AG04450 (cell line): ENCODE measurements at regions of chr20 and their contacts with region 1.

Region 1: GRCh38 chr20:35561268-35561667 is 19.4 kb downstream of the ERGIC3 start:
- DNase-seq: peak; percentile 4
- H3K4me3 ChIP-seq: no peak overlapping the region
- H3K27ac ChIP-seq: no peak overlapping the region
- H3K27me3 ChIP-seq: peaks cover under 1% of the 10 kb centered on the region
- CTCF ChIP-seq: peak; percentile 32; the same call in 1 of the 2 replicates

Region 2: DNA sequence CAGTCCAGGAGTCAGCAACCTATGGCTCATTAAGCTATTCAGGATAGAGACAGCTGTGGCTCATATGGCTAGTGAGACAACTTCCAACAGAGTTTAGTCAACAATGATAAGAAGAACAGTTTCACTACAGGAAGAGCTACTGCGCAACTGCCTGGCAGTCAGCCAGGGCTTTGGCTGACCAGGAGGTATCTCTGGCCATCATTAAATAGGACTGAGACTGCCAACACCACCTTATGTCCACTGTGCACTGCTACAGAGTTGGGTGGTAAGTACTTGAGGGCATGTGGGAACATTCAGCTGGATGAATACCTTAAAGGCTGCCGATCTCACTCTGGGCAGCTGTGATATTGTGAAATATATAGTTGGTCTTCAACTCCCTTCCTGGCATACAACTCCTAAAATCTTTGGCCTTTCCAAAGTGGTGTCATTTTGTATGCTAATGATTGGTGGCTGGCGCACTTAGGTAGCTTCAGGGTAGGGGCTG is 216.9 kb before region 1 on chr20:
- CTCF ChIA-PET with region 1: no interaction called
- POLR2A ChIA-PET with region 1: no interaction called
- DNase-seq: peak; percentile 70
- H3K4me3 ChIP-seq: no peak overlapping the region
- H3K27ac ChIP-seq: peak overlapping the region; percentile 34
- H3K27me3 ChIP-seq: no peaks in the 10 kb centered on the region
- CTCF ChIP-seq: no peak

Region 3: DNA sequence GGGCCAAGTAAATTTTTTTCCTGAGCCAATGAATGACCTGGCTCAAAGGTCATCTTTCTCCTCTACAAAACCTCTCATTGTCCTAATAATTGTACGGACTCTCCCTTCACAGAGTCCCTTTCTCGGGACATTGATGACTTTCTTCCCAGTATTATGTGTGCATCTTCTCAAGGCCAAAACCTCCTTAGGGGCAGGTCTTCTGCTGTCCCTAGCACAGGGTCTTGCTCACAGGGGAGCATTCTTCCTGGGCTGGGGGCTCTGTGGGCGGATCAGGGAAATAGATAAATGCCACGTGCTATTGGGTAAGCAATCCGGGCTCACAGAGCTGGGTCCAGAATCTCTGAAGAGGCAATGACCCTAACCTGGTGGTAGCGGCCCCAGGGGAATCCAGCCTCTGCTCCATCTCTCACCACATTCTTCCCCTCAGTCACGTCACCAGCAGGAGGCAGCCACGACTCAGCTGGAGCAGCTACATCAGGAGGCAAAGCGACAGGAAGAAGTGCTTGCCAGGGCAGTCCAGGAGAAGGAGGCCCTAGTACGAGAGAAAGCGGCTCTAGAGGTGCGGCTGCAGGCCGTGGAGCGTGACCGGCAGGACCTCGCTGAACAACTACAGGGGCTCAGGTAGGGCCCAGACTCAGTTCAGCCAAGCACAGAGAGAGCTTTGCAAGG is 82.3 kb before region 1 on chr20:
- CTCF ChIA-PET with region 1: no interaction called
- POLR2A ChIA-PET with region 1: interaction called, 10 read pairs
- DNase-seq: no peak
- H3K4me3 ChIP-seq: no peak overlapping the region
- H3K27ac ChIP-seq: no peak overlapping the region
- H3K27me3 ChIP-seq: no peaks in the 10 kb centered on the region
- CTCF ChIP-seq: no peak